Caco-2 (cell line): ENCODE measurements at regions of chr18 and their contacts with region 1.

Region 1: DNA sequence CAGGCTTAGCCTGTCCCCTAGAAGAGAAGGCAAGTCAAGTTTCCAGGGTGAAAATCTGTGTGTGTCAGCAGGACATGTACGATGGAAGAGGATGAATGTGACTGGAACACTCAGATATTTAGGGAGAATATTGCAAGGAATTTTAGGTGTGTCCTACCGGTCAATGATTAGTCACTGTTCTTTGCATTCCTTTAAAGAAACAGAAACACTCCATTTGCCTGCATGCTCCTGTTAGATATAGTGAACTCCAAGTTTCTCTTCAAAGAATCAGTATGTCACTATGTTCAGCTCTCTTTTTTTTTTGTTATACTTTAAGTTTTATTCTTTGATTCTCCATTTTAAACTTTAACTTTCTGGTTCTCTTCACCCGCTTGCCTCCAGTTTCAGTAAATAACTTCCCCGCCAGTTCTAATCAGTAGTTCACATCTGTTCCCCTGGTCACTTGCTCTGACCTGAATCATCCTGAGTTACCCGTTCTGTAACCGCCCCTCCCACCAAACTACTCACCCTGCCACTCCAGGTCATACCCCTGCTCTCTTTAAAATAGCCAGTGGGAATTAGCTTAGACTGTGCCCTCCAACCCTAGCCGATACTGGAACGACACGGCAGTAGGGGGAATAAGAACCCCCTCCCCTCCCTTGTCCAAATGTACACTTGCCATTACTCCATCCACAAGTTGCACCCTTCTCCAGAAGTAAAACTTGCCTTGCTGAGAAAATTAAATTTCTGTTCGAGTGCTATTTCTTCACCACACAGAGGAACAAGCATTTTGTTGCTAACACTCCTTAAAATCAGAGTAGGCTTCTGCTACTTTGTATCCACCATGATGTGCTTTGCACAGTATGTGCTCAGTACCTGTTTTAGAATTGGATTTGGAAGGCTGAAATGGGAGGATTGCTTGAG is 268.4 kb downstream of the METTL4 start:
- DNase-seq: peak; percentile 81 to 87
- H3K4me3 ChIP-seq: peak overlapping the region; percentile 13; the same call in 1 of the 2 replicates
- H3K4me3 Mint-ChIP-seq: peak overlapping the region; percentile 67
- H3K27ac Mint-ChIP-seq: peak overlapping the region; percentile 95
- H3K4me1 ChIP-seq: peaks cover 49% of the 10 kb centered on the region
- H3K4me1 Mint-ChIP-seq: peaks cover 29% of the 10 kb centered on the region
- H3K27me3 ChIP-seq: no peaks in the 10 kb centered on the region
- H3K27me3 Mint-ChIP-seq: no peaks in the 10 kb centered on the region
- CTCF ChIP-seq: no peak

Region 2: GRCh38 chr18:2104620-2105462 is 198.0 kb before region 1 on chr18:
- CTCF ChIA-PET with region 1: no interaction called
- POLR2A ChIA-PET with region 1: no interaction called
- intact Hi-C with region 1: loop called (anchors 10 kb)
- DNase-seq: peak; percentile 48 to 61
- H3K4me3 ChIP-seq: no peak overlapping the region
- H3K4me3 Mint-ChIP-seq: no peak overlapping the region
- H3K27ac Mint-ChIP-seq: no peak overlapping the region
- H3K4me1 ChIP-seq: peaks cover 4% of the 10 kb centered on the region; the same call in 1 of the 2 replicates
- H3K4me1 Mint-ChIP-seq: no peaks in the 10 kb centered on the region
- H3K27me3 ChIP-seq: no peaks in the 10 kb centered on the region
- H3K27me3 Mint-ChIP-seq: no peaks in the 10 kb centered on the region
- CTCF ChIP-seq: peak; percentile 73 to 85

Region 3: GRCh38 chr18:2237706-2238105 is 65.2 kb before region 1 on chr18:
- CTCF ChIA-PET with region 1: no interaction called
- POLR2A ChIA-PET with region 1: no interaction called
- intact Hi-C with region 1: loop called (anchors 2 kb)
- DNase-seq: peak; percentile 45 to 80
- H3K4me3 ChIP-seq: no peak overlapping the region
- H3K4me3 Mint-ChIP-seq: peak overlapping the region; percentile 22
- H3K27ac Mint-ChIP-seq: peak overlapping the region; percentile 46
- H3K4me1 ChIP-seq: peaks cover 38% of the 10 kb centered on the region
- H3K4me1 Mint-ChIP-seq: peaks cover 22% of the 10 kb centered on the region
- H3K27me3 ChIP-seq: no peaks in the 10 kb centered on the region
- H3K27me3 Mint-ChIP-seq: no peaks in the 10 kb centered on the region
- CTCF ChIP-seq: no peak

Region 4: GRCh38 chr18:2244626-2245025 is 58.2 kb before region 1 on chr18:
- CTCF ChIA-PET with region 1: no interaction called
- POLR2A ChIA-PET with region 1: interaction called, 3 read pairs
- intact Hi-C with region 1: loop called (anchors 2 kb)
- DNase-seq: no peak
- H3K4me3 ChIP-seq: no peak overlapping the region
- H3K4me3 Mint-ChIP-seq: no peak overlapping the region
- H3K27ac Mint-ChIP-seq: no peak overlapping the region
- H3K4me1 ChIP-seq: peaks cover 15% of the 10 kb centered on the region
- H3K4me1 Mint-ChIP-seq: peaks cover 37% of the 10 kb centered on the region
- H3K27me3 ChIP-seq: no peaks in the 10 kb centered on the region
- H3K27me3 Mint-ChIP-seq: no peaks in the 10 kb centered on the region
- CTCF ChIP-seq: no peak

Region 5: GRCh38 chr18:2325308-2325849 is 22.5 kb after region 1 on chr18:
- CTCF ChIA-PET with region 1: interaction called, 10 read pairs
- POLR2A ChIA-PET with region 1: no interaction called
- intact Hi-C with region 1: loop called (anchors 1 kb)
- DNase-seq: peak; percentile 49 to 59
- H3K4me3 ChIP-seq: no peak overlapping the region
- H3K4me3 Mint-ChIP-seq: peak overlapping the region; percentile 45
- H3K27ac Mint-ChIP-seq: peak overlapping the region; percentile 87
- H3K4me1 ChIP-seq: peaks cover 26% of the 10 kb centered on the region
- H3K4me1 Mint-ChIP-seq: peaks cover 17% of the 10 kb centered on the region
- H3K27me3 ChIP-seq: no peaks in the 10 kb centered on the region
- H3K27me3 Mint-ChIP-seq: no peaks in the 10 kb centered on the region
- CTCF ChIP-seq: no peak

Region 6: DNA sequence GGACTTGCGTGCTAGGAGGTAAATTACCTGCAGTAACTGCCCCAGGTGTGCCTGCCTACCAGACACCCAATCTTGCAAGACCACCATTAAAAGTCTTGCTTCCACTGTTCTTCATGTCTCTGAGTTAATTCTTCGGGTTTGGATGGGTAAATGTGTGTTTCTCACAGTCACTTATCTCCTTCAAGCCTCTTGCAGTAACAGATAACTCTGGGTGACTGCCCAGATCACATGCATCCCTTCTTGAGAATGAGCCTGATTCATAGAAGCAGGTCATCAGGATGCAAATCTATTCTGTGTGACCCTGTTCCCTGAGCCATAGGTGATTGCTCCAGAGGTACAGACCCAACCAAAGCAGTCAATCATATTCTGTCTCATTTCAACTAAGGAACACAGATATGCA is 73.8 kb after region 1 on chr18:
- CTCF ChIA-PET with region 1: no interaction called
- POLR2A ChIA-PET with region 1: no interaction called
- intact Hi-C with region 1: no loop called
- DNase-seq: no peak
- H3K4me3 ChIP-seq: no peak overlapping the region
- H3K4me3 Mint-ChIP-seq: no peak overlapping the region
- H3K27ac Mint-ChIP-seq: no peak overlapping the region
- H3K4me1 ChIP-seq: no peaks in the 10 kb centered on the region
- H3K4me1 Mint-ChIP-seq: no peaks in the 10 kb centered on the region
- H3K27me3 ChIP-seq: no peaks in the 10 kb centered on the region; the same call in 1 of the 2 replicates
- H3K27me3 Mint-ChIP-seq: peaks cover 8% of the 10 kb centered on the region
- CTCF ChIP-seq: no peak

Region 7: GRCh38 chr18:2529154-2529553 is 226.3 kb after region 1 on chr18:
- CTCF ChIA-PET with region 1: no interaction called
- POLR2A ChIA-PET with region 1: no interaction called
- intact Hi-C with region 1: loop called (anchors 10 kb)
- DNase-seq: no peak
- H3K4me3 ChIP-seq: no peak overlapping the region
- H3K4me3 Mint-ChIP-seq: no peak overlapping the region
- H3K27ac Mint-ChIP-seq: no peak overlapping the region
- H3K4me1 ChIP-seq: no peaks in the 10 kb centered on the region
- H3K4me1 Mint-ChIP-seq: no peaks in the 10 kb centered on the region
- H3K27me3 ChIP-seq: no peaks in the 10 kb centered on the region
- H3K27me3 Mint-ChIP-seq: no peaks in the 10 kb centered on the region
- CTCF ChIP-seq: no peak